Prostate gland (tissue), 2 donors: ENCODE measurements at regions of chr4 and their contacts with region 1.

Region 1: DNA sequence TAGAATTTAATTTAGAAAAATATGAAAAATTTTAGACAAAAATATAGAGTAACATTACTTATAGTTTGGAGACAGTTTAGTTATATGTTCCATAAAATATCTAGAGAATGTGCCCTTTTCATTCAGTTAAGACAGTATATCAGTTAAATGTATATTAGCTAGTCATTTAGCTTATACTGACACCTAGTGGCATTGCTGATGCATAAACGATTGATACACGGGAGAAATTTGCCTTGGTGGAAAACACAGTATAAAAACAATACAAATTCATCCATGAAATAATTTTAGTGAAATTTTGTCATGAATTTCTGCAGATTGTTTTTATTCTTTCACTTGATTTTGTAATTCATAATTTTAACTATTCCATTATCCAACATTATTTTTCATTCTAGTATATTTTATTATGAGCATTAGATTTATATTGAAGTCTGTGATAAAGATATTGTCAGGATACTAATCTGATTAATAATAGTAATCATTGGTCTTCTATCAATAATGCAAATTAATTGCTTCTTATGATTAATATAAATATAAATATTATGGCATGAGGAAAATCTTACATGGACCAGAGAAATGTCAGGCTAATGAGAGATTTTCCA is 219.0 kb downstream of the TLL1 start:
- DNase-seq: peak; percentile 9
- H3K4me3 ChIP-seq: no peak overlapping the region
- H3K27ac ChIP-seq: no peak overlapping the region
- H3K4me1 ChIP-seq: no peaks in the 10 kb centered on the region
- H3K27me3 ChIP-seq: no peaks in the 10 kb centered on the region
- CTCF ChIP-seq: peak in 3 of 4 experiments; percentile 60 to 76 (median 74)
- POLR2A ChIP-seq: no peak

Region 2: GRCh38 chr4:165493359-165493758 is 598.7 kb before region 1 on chr4:
- intact Hi-C with region 1: loop called (anchors 5 kb)
- DNase-seq: peak; percentile 54
- H3K4me3 ChIP-seq: no peak overlapping the region
- H3K27ac ChIP-seq: no peak overlapping the region
- H3K4me1 ChIP-seq: no peaks in the 10 kb centered on the region
- H3K27me3 ChIP-seq: no peaks in the 10 kb centered on the region
- CTCF ChIP-seq: peak in 3 of 4 experiments; percentile 39 to 64 (median 55)
- POLR2A ChIP-seq: no peak

Region 3: DNA sequence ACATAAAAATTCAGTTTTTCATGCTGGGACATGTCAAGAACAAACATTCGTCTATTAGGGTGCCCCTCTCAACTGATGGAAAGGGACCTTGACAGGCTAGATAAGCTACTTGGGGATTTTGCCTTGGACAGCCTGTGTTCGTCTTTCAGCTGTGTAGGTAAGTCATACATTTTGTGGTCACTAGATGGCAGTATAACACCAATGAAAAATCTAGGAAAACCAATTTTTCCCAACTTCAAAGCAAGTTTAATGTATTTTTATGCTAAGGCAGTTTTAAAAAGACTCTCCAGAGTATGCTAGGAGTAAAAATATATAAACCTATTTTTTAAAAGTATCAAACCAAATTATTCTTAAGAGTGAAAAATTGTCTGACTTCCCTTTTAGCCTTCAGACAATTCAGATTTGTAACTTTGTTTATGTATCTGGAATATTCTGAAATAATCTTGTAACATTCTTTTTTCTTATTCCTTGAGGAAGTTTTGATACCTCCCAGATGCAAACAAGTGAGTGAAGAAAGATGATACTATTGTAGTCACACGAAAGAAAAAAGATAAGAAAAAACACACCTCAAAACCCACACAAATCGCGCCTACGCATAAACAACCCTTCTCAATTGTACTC is 554.9 kb before region 1 on chr4:
- intact Hi-C with region 1: loop called (anchors 1 kb)
- DNase-seq: peak; percentile 19
- H3K4me3 ChIP-seq: no peak overlapping the region
- H3K27ac ChIP-seq: no peak overlapping the region
- H3K4me1 ChIP-seq: no peaks in the 10 kb centered on the region
- H3K27me3 ChIP-seq: no peaks in the 10 kb centered on the region
- CTCF ChIP-seq: peak; percentile 51 to 84 (median 73)
- POLR2A ChIP-seq: no peak

Region 4: GRCh38 chr4:166045457-166045856 is 46.6 kb before region 1 on chr4:
- intact Hi-C with region 1: no loop called
- DNase-seq: no peak
- H3K4me3 ChIP-seq: no peak overlapping the region
- H3K27ac ChIP-seq: no peak overlapping the region
- H3K4me1 ChIP-seq: no peaks in the 10 kb centered on the region
- H3K27me3 ChIP-seq: no peaks in the 10 kb centered on the region
- CTCF ChIP-seq: no peak
- POLR2A ChIP-seq: no peak

Region 5: DNA sequence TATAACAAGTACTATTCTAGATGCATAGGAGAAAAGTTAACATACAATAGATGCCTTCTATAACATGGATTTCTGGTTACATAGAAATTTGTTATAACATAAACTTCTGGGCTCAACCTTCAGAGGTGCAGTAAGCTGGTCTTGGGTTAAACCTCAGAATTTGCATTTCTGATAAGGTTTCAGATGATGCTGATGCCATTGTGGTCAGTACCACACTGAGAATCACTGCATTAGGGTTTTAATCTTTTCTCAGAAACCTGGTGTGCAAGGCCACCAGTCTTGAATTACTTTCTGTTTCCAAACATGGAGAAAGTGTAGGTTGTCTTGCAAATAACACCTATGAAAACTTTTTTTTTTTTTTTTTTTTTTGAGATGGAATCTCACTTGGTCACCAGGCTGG is 996.1 kb after region 1 on chr4:
- intact Hi-C with region 1: no loop called
- DNase-seq: no peak
- H3K4me3 ChIP-seq: no peak overlapping the region
- H3K27ac ChIP-seq: no peak overlapping the region
- H3K4me1 ChIP-seq: no peaks in the 10 kb centered on the region
- H3K27me3 ChIP-seq: no peaks in the 10 kb centered on the region
- CTCF ChIP-seq: no peak
- POLR2A ChIP-seq: no peak